Natural killer cell (primary cell): ENCODE measurements at regions of chr3 and their contacts with region 1.

Region 1: GRCh38 chr3:157130467-157131251 is 29.3 kb downstream of the CCNL1 start:
- DNase-seq: peak; percentile 46 to 92
- ATAC-seq: peak; percentile 70 to 73 (median 71)
- H3K4me3 ChIP-seq: no peak overlapping the region
- H3K4me3 Mint-ChIP-seq: peak overlapping the region; percentile 67
- H3K27ac ChIP-seq: peak overlapping the region; percentile 78
- H3K27ac Mint-ChIP-seq: peak overlapping the region; percentile 88
- H3K4me1 ChIP-seq: peaks cover 70% of the 10 kb centered on the region
- H3K4me1 Mint-ChIP-seq: peaks cover 43 to 50% of the 10 kb centered on the region in 2 donors
- H3K27me3 ChIP-seq: no peaks in the 10 kb centered on the region
- H3K27me3 Mint-ChIP-seq: no peaks in the 10 kb centered on the region
- CTCF ChIP-seq: peak; percentile 71

Region 2: GRCh38 chr3:156816800-156817645 is 313.6 kb before region 1 on chr3:
- intact Hi-C with region 1: loop called (anchors 10 kb)
- DNase-seq: peak; percentile 76 to 96
- ATAC-seq: peak; percentile 82 to 89 (median 85)
- H3K4me3 ChIP-seq: peak overlapping the region; percentile 55
- H3K4me3 Mint-ChIP-seq: peak overlapping the region; percentile 96
- H3K27ac ChIP-seq: peak overlapping the region; percentile 79
- H3K27ac Mint-ChIP-seq: peak overlapping the region; percentile 79 to 96
- H3K4me1 ChIP-seq: peaks cover 12% of the 10 kb centered on the region
- H3K4me1 Mint-ChIP-seq: peaks cover 31% of the 10 kb centered on the region in 2 donors
- H3K27me3 ChIP-seq: no peaks in the 10 kb centered on the region
- H3K27me3 Mint-ChIP-seq: no peaks in the 10 kb centered on the region
- CTCF ChIP-seq: no peak

Region 3: DNA sequence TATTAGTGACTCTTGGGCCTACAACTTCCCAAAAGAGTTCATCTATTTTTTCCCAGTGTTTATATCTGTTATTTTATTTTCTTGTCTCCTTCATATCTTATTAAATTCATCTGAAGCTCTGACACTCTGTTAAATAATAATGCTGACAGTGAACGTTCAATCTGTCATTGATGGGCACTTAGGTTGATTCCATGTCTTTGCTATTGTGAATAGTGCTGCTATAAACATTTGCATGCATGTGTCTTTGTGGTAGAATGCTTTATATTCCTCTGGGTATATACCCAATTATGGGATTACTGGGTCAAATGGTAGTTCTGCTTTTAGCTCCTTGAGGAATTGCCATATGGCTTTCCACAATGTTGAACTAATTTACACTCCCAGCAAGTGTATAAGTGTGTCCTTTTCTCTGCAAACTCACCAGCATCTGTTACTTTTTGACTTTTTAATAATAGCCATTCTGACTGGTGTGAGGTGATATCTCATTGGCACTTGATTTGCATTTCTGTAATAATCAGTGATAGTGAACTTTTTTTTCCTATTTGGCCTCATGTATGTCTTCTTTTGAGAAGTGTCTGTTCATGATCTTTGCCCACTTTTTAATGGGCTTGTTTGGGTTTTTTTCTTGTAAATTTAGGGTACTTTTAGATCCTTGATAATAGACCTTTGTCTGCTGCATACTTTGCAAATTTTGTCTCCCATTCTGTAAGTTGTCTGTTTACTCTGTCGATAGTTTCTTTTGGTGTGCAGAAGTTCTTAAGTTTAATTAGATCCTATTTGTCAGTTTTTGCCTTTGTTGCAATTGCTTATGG is 182.1 kb before region 1 on chr3:
- intact Hi-C with region 1: no loop called
- DNase-seq: no peak
- ATAC-seq: no peak
- H3K4me3 ChIP-seq: no peak overlapping the region
- H3K4me3 Mint-ChIP-seq: no peak overlapping the region
- H3K27ac ChIP-seq: no peak overlapping the region
- H3K27ac Mint-ChIP-seq: no peak overlapping the region
- H3K4me1 ChIP-seq: no peaks in the 10 kb centered on the region
- H3K4me1 Mint-ChIP-seq: no peaks in the 10 kb centered on the region
- H3K27me3 ChIP-seq: no peaks in the 10 kb centered on the region
- H3K27me3 Mint-ChIP-seq: peaks cover 7 to 21% of the 10 kb centered on the region in 2 donors
- CTCF ChIP-seq: no peak

Region 4: DNA sequence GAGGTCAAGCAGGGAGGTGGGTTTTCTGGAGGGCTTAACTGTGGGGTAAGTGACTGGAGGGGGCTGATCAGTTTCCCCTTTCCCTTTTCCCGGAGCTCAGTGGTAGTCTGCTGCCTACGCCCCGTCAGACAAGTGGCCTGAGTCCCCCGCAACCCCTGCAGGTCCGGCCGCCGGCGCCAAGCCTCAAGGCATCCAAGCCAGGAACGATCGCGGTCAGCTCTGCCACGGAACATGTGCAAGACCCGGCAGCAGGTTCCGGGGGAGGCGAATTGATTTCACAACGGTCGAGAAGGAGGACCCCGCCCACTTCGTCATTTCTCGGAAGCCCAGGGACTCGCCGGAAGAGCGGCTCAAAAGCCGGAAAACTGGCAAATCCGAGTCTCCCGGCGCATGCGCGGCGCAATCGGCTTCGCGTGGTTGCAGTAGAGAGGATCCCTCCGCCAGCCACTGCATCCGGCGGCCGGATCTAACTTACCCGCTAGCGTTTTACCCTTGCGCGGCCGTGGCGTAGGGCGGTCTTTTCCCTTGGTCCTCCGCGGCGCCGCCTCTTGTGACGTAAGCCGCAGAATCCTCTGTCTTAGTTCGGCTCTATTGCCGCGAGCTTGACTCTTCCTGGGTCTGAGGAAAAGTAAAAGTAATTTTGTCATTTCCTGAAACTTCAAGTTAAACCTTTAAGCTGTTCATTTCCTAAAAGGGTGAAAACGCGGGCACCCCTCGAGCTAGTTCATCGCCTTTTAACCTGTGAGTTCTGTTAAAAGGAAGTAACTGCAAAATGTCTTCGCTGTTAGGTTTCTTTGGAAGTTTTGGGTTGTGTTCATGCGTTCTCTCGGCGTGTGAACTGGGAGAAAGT is 44.2 kb after region 1 on chr3:
- intact Hi-C with region 1: no loop called
- DNase-seq: peak; percentile 94 to 100
- ATAC-seq: peak; percentile 93 to 98 (median 93)
- H3K4me3 ChIP-seq: peak overlapping the region; percentile 64
- H3K4me3 Mint-ChIP-seq: peak overlapping the region; percentile 94
- H3K27ac ChIP-seq: peak overlapping the region; percentile 93
- H3K27ac Mint-ChIP-seq: peak overlapping the region; percentile 94 to 100
- H3K4me1 ChIP-seq: peaks cover 14% of the 10 kb centered on the region
- H3K4me1 Mint-ChIP-seq: peaks cover 21% of the 10 kb centered on the region in 2 donors
- H3K27me3 ChIP-seq: no peaks in the 10 kb centered on the region
- H3K27me3 Mint-ChIP-seq: peaks cover 9 to 10% of the 10 kb centered on the region in 2 donors
- CTCF ChIP-seq: no peak